ENCODE measurements at regions of chr1 and their contacts with region 1.

Region 1: DNA sequence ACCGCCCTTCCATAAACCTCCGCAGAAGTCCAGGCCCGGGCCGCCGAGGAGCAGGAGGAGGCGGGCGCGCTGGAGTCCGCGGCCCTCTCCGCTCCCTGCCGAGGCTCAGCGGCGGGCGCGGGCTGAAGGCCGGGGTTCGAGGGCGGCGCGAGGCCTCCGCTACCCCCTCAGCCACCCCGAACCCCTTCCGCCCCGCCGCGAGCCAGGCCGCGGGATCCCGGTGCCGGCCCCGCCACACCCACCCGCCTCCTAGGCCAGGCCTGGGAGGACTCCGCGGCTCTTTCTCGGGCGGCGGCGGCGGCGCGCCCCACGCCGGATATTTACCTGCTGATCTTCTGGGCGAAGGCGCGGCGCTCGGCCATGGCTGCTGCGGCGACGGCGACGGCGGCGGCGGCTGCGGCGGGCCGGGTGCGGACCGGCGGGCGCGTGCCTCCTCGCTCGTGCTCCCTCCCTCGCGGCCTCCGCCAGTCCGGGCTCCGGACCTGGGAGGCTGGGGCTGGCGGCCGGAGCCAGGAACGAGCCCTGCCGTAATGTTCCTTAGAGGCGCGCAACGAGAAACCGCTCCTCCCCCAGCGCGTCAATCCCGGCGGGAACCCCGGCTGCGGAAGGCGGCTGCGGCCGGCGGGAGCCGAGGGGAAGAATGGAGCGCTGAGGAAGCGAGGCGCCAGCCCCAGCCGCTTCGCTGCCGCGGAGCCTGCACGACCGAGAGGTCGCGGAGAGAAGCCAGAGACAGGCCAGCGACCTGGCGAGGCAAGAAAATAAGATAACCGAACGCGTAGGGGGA is at the start of gene DOCK7:
- DNase-seq: peak; percentile 56
- H3K4me3 Mint-ChIP-seq: peak within 1 kb of the TSS; percentile 86
- H3K27ac Mint-ChIP-seq: peak within 1 kb of the TSS; percentile 60
- H3K4me1 Mint-ChIP-seq: peaks cover 26% of the 10 kb centered on the region
- H3K27me3 Mint-ChIP-seq: peaks cover 3% of the 10 kb centered on the region
- total RNA-seq, gene DOCK7: 7.7 to 10.0 TPM

Region 2: GRCh38 chr1:62783723-62784508 is 95.8 kb after region 1 on chr1 and contains the start of gene ATG4C:
- CTCF ChIA-PET with region 1: no interaction called
- intact Hi-C with region 1: loop called (anchors 1 kb)
- DNase-seq: peak; percentile 96
- H3K4me3 Mint-ChIP-seq: no peak within 1 kb of the TSS
- H3K27ac Mint-ChIP-seq: no peak within 1 kb of the TSS
- H3K4me1 Mint-ChIP-seq: peaks cover 13% of the 10 kb centered on the region
- H3K27me3 Mint-ChIP-seq: peaks cover 7% of the 10 kb centered on the region
- total RNA-seq, gene ATG4C: 13.4 to 15.1 TPM

Measured in activated naive CD4-positive, alpha-beta T cell treated with anti-CD3 and anti-CD28 coated beads for 36 hours (primary cell).